GM12878 (cell line): ENCODE measurements at regions of chr1 and their contacts with region 1.

Region 1: GRCh38 chr1:39538588-39539465 is 37.8 kb downstream of the PABPC4 start:
- DNase-seq: peak; percentile 27
- ATAC-seq: peak; percentile 100
- H3K4me3 ChIP-seq: no peak overlapping the region
- H3K27ac ChIP-seq: no peak overlapping the region
- H3K4me1 ChIP-seq: peaks cover 10% of the 10 kb centered on the region
- H3K27me3 ChIP-seq: no peaks in the 10 kb centered on the region
- CTCF ChIP-seq: peak; percentile 89 to 91 (median 90)
- EP300 ChIP-seq: no peak
- POLR2A ChIP-seq: no peak
- RAD21 ChIP-seq: peak; percentile 93

Region 2: DNA sequence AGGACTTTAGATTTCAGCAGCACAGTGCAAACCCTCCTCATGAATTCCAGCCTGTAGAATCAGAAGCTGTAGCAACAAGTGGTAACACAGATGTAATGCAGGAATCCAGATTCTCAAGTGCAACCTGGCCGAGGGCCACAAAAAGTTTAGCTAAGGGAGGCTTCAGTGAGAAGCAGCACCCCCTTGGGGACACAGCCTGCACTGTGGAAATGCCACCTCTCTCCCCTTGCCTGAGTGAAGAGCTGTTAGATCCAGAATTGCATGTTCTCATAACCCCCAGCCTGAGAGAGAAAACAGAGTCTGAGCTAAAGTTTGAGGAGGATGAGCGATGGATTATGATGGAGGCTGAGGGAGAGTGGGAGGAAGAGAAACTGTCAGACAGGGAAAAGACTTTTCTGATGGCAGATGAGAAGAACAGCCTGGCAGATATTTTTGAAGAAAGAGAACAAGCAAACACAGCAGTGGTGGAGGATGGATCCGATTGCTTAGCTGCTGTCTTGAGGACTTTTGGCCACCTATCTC is 127.9 kb before region 1 on chr1:
- CTCF ChIA-PET with region 1: interaction called, 19 read pairs
- POLR2A ChIA-PET with region 1: no interaction called
- RAD21 ChIA-PET with region 1: no interaction called
- SMC1A ChIA-PET with region 1: interaction called, 4 read pairs
- in situ Hi-C with region 1: no loop called
- intact Hi-C with region 1: no loop called
- DNase-seq: no peak
- ATAC-seq: peak; percentile 44
- H3K4me3 ChIP-seq: no peak overlapping the region
- H3K27ac ChIP-seq: no peak overlapping the region
- H3K4me1 ChIP-seq: peaks cover 33% of the 10 kb centered on the region
- H3K27me3 ChIP-seq: no peaks in the 10 kb centered on the region
- CTCF ChIP-seq: peak; percentile 65 to 70 (median 68)
- EP300 ChIP-seq: no peak
- POLR2A ChIP-seq: no peak
- RAD21 ChIP-seq: peak; percentile 65

Region 3: GRCh38 chr1:39469150-39469549 is 69.7 kb before region 1 on chr1:
- CTCF ChIA-PET with region 1: interaction called, 27 read pairs
- POLR2A ChIA-PET with region 1: no interaction called
- RAD21 ChIA-PET with region 1: interaction called, 3 read pairs
- SMC1A ChIA-PET with region 1: interaction called, 9 read pairs
- in situ Hi-C with region 1: no loop called
- intact Hi-C with region 1: loop called (anchors 5 kb)
- DNase-seq: no peak
- ATAC-seq: no peak
- H3K4me3 ChIP-seq: no peak overlapping the region
- H3K27ac ChIP-seq: no peak overlapping the region
- H3K4me1 ChIP-seq: no peaks in the 10 kb centered on the region
- H3K27me3 ChIP-seq: no peaks in the 10 kb centered on the region
- CTCF ChIP-seq: 0 out of 6 replicates have a peak, but pooled peaks of 1 of the 3 experiments have one; percentile 5
- EP300 ChIP-seq: no peak
- POLR2A ChIP-seq: no peak
- RAD21 ChIP-seq: no peak

Region 4: GRCh38 chr1:39490596-39491145 is 48.2 kb before region 1 on chr1:
- CTCF ChIA-PET with region 1: interaction called, 13 read pairs
- POLR2A ChIA-PET with region 1: no interaction called
- RAD21 ChIA-PET with region 1: no interaction called
- SMC1A ChIA-PET with region 1: interaction called, 6 read pairs
- in situ Hi-C with region 1: loop called (anchors 5 kb)
- intact Hi-C with region 1: loop called (anchors 5 kb)
- DNase-seq: no peak
- ATAC-seq: no peak; the same call in 1 of the 3 replicates
- H3K4me3 ChIP-seq: peak overlapping the region; percentile 36; the same call in 1 of the 2 replicates
- H3K27ac ChIP-seq: no peak overlapping the region
- H3K4me1 ChIP-seq: 0 out of 2 replicates have a peak, but pooled peaks cover 2% of the 10 kb centered on the region
- H3K27me3 ChIP-seq: peaks cover 0 to 1% of the 10 kb centered on the region in 2 experiments; a peak in 1 of 4 replicates
- CTCF ChIP-seq: no peak
- EP300 ChIP-seq: no peak
- POLR2A ChIP-seq: no peak; the same call in 1 of the 2 replicates
- RAD21 ChIP-seq: no peak